MCF 10A (cell line): ENCODE measurements at regions of chr3 and their contacts with region 1.

Region 1: GRCh38 chr3:107235928-107236315 is 141.3 kb upstream of the CCDC54 start:
- DNase-seq: peak; percentile 90
- H3K4me3 Mint-ChIP-seq: peak overlapping the region; percentile 71
- H3K27ac Mint-ChIP-seq: peak overlapping the region; percentile 84
- H3K4me1 Mint-ChIP-seq: peaks cover 31% of the 10 kb centered on the region
- H3K27me3 Mint-ChIP-seq: no peaks in the 10 kb centered on the region
- CTCF ChIP-seq: peak; percentile 83

Region 2: DNA sequence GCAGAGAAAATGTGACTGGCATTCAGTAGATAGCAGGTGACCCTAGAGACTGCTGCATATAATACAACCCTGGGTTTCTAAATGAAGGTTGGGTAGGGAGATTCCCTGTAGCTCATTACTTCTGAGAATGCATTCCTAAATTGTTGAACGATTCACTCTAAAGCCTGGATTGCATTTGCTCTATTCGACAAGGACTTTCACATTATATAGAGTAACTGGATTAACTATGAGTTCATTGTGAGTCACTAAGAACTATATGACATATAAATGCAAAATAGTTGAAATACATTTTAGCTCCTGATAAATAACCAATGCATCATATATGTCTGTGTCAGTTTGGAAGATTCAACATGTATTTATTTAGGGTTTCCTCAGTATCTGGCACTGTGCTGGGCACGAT is 153.4 kb before region 1 on chr3:
- CTCF ChIA-PET with region 1: no interaction called
- POLR2A ChIA-PET with region 1: no interaction called
- intact Hi-C with region 1: no loop called
- DNase-seq: no peak
- H3K4me3 Mint-ChIP-seq: no peak overlapping the region
- H3K27ac Mint-ChIP-seq: no peak overlapping the region
- H3K4me1 Mint-ChIP-seq: no peaks in the 10 kb centered on the region
- H3K27me3 Mint-ChIP-seq: no peaks in the 10 kb centered on the region
- CTCF ChIP-seq: no peak

Region 3: DNA sequence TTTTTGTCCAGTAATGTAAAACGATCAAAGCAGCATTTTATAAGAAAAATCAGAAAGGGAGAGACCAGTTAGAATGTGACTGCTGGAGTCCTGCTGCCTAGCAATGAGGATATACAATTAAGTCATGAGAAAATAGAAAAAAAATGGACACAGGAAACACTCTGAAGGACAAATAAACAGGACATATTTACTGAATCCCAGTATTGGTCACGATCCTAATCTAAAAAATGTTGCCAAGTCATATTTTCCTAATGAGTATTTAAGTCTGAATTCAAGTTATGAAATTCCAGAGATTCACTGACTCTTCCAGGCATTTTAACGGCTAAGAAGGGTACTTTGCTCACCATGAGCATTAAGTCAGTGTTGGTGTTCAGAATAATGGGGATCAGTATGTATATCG is 13.0 kb before region 1 on chr3:
- CTCF ChIA-PET with region 1: interaction called, 34 read pairs
- POLR2A ChIA-PET with region 1: interaction called, 48 read pairs
- intact Hi-C with region 1: no loop called
- DNase-seq: peak; percentile 53
- H3K4me3 Mint-ChIP-seq: no peak overlapping the region
- H3K27ac Mint-ChIP-seq: peak overlapping the region; percentile 88
- H3K4me1 Mint-ChIP-seq: peaks cover 40% of the 10 kb centered on the region
- H3K27me3 Mint-ChIP-seq: no peaks in the 10 kb centered on the region
- CTCF ChIP-seq: no peak

Region 4: GRCh38 chr3:107284612-107285011 is 48.7 kb after region 1 on chr3:
- CTCF ChIA-PET with region 1: interaction called, 10 read pairs
- POLR2A ChIA-PET with region 1: interaction called, 5 read pairs
- intact Hi-C with region 1: no loop called
- DNase-seq: peak; percentile 39
- H3K4me3 Mint-ChIP-seq: no peak overlapping the region
- H3K27ac Mint-ChIP-seq: peak overlapping the region; percentile 96
- H3K4me1 Mint-ChIP-seq: peaks cover 22% of the 10 kb centered on the region
- H3K27me3 Mint-ChIP-seq: no peaks in the 10 kb centered on the region
- CTCF ChIP-seq: no peak

Region 5: DNA sequence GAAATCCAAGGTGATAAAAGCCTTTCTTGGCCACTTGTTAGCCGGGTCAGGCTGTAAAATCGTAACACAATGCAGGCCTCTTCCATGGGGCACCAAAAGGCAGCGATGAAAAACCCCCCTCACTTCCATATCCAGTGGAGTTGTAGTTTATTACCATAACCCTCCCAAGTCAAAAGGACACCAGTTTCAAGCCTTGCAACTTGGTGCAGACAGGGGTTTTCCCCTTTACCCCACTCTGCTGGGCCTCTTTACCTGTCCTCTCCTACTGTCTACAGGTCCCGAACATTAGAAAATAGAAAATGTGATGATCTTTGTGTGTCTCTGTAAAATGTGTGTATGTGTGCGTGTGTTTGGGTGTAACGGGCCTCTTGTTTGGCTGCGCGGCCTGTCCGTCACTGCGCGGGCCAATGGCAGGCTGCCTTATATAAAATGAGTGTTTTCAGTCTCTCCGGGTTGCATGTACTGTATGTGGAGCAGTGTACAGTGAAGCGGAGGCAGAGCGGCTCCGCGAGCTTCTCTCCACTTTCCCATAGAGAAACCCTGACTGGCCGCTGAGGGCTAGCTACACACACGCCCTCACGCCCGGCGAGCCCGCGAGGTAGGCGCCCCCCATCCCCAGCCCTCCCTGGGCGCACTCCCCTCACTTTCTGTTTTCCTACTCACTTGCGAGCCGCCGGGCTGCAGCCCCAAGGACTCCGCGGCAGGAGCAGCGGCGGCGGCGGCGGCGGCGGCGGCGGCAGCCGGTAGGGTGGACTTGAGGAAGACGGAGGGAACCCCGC is 286.8 kb after region 1 on chr3 and contains the start of gene BBX:
- CTCF ChIA-PET with region 1: interaction called, 4 read pairs
- POLR2A ChIA-PET with region 1: interaction called, 22 read pairs
- intact Hi-C with region 1: loop called (anchors 1 kb)
- DNase-seq: peak; percentile 93
- H3K4me3 Mint-ChIP-seq: peak within 1 kb of the TSS; percentile 85
- H3K27ac Mint-ChIP-seq: peak within 1 kb of the TSS; percentile 93
- H3K4me1 Mint-ChIP-seq: peaks cover 14% of the 10 kb centered on the region
- H3K27me3 Mint-ChIP-seq: no peaks in the 10 kb centered on the region
- CTCF ChIP-seq: no peak
- total RNA-seq, gene BBX: 73.2 and 77.2 TPM in 2 replicates

Region 6: GRCh38 chr3:107578523-107578922 is 342.6 kb after region 1 on chr3:
- CTCF ChIA-PET with region 1: no interaction called
- POLR2A ChIA-PET with region 1: no interaction called
- intact Hi-C with region 1: no loop called
- DNase-seq: no peak
- H3K4me3 Mint-ChIP-seq: no peak overlapping the region
- H3K27ac Mint-ChIP-seq: no peak overlapping the region
- H3K4me1 Mint-ChIP-seq: no peaks in the 10 kb centered on the region
- H3K27me3 Mint-ChIP-seq: no peaks in the 10 kb centered on the region
- CTCF ChIP-seq: no peak

Region 7: GRCh38 chr3:107927361-107928083 is 691.6 kb after region 1 on chr3:
- CTCF ChIA-PET with region 1: interaction called, 4 read pairs
- POLR2A ChIA-PET with region 1: no interaction called
- intact Hi-C with region 1: loop called (anchors 5 kb)
- DNase-seq: peak; percentile 62
- H3K4me3 Mint-ChIP-seq: peak overlapping the region; percentile 71
- H3K27ac Mint-ChIP-seq: no peak overlapping the region
- H3K4me1 Mint-ChIP-seq: no peaks in the 10 kb centered on the region
- H3K27me3 Mint-ChIP-seq: no peaks in the 10 kb centered on the region
- CTCF ChIP-seq: peak; percentile 80